Activated T-helper 1 cell treated with anti-CD3 and anti-CD28 coated beads, Interleukin-12 subunit alpha, Interleukin-12 subunit beta, Interleukin-2, Interleukin-4 antibody, amounts not matched to agents 30 ng/mL and 10 ng/mL and 1 ng/mL, durations not matched to agents 14 hours and 24 hours and 36 hours (primary cell): ENCODE measurements at regions of chr20 and their contacts with region 1.

Region 1: GRCh38 chr20:34129518-34130162 is 17.6 kb upstream of the EIF2S2 start:
- DNase-seq: peak; percentile 50
- H3K4me3 Mint-ChIP-seq: no peak overlapping the region
- H3K27ac Mint-ChIP-seq: no peak overlapping the region
- H3K4me1 Mint-ChIP-seq: peaks cover 12% of the 10 kb centered on the region
- H3K27me3 Mint-ChIP-seq: peaks cover 18% of the 10 kb centered on the region

Region 2: DNA sequence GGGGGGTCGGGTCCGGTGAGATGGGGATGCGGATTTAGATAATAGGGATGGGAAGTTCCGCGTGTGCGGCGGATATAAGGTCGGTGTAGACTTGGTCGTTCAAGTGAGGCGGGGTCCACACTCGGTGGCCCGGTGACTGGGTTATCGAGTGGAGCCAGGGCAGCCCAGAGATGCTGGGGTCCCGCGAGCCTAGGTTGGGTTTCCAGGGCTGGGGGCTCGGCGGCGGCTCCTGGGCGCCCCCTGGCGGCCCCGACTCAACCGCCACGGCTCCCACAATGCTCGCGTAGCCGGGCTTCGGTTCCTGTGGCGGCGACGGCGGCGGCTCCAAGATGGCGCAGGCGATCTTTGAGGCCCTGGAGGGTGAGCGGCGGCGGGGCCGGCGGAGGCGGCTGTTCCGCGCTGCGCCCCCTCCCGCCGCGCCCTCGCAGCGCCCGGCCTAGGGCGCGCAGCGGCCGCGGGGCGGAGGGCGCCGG is 397.9 kb before region 1 on chr20 and contains the start of gene ZNF341:
- intact Hi-C with region 1: loop called (anchors 1 kb)
- DNase-seq: peak; percentile 87
- H3K4me3 Mint-ChIP-seq: peak within 1 kb of the TSS; percentile 89
- H3K27ac Mint-ChIP-seq: peak within 1 kb of the TSS; percentile 97
- H3K4me1 Mint-ChIP-seq: peaks cover 27% of the 10 kb centered on the region
- H3K27me3 Mint-ChIP-seq: no peaks in the 10 kb centered on the region
- total RNA-seq, gene ZNF341: 6.7 and 6.8 TPM in 2 replicates

Region 3: DNA sequence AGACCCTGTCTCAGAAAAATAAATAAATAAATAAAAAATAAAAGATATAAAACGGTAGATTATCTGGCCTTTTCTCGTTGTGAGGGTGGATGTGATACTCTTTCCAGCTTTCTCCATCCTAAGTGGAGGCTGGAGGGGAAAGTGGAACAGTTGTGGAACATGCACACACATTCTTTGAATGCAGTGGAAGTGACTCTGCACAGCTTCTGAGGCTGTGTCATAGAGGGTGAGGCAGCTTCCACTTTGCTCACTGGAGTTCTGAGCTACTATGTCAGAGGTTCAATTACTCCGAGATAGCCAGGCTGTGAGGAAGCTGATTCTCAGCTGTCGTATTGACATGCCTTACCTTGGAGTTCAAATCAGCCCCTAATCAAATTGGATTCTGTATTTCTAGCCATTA is 236.3 kb before region 1 on chr20:
- intact Hi-C with region 1: no loop called
- DNase-seq: no peak
- H3K4me3 Mint-ChIP-seq: no peak overlapping the region
- H3K27ac Mint-ChIP-seq: no peak overlapping the region
- H3K4me1 Mint-ChIP-seq: no peaks in the 10 kb centered on the region
- H3K27me3 Mint-ChIP-seq: peaks cover 14% of the 10 kb centered on the region

Region 4: GRCh38 chr20:33915726-33916331 is 213.8 kb before region 1 on chr20:
- intact Hi-C with region 1: loop called (anchors 1 kb)
- DNase-seq: peak; percentile 20
- H3K4me3 Mint-ChIP-seq: no peak overlapping the region
- H3K27ac Mint-ChIP-seq: no peak overlapping the region
- H3K4me1 Mint-ChIP-seq: peaks cover 5% of the 10 kb centered on the region
- H3K27me3 Mint-ChIP-seq: peaks cover 13% of the 10 kb centered on the region

Region 5: DNA sequence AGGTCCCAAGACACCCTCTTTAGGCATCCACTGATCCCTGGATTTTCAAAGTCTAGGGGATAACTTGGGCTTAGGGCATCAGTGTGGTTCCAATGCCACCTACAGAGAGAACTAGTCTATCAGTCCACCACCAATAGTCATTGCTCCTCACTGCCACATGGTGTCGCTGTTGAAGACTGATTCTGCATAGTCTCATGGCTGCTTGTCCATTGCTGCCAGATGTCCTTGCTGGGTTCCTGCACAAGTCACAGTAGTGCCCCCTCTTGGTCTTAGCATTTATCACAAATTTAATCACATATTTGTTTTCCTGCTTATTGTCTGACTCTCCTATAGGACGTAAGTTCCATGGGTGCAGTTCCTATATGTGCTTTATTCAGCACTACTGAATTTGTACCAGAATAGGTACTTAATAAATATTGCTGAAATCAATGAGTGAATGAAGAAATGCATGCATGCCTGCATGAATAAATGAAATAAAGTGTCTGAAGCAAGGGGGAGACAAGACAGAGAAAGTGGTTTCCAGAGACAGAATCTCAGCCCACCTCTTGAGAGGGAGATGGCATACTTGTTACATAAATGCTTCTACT is 181.8 kb before region 1 on chr20:
- intact Hi-C with region 1: loop called (anchors 1 kb)
- DNase-seq: peak; percentile 9
- H3K4me3 Mint-ChIP-seq: no peak overlapping the region
- H3K27ac Mint-ChIP-seq: no peak overlapping the region
- H3K4me1 Mint-ChIP-seq: no peaks in the 10 kb centered on the region
- H3K27me3 Mint-ChIP-seq: peaks cover 4% of the 10 kb centered on the region

Region 6: DNA sequence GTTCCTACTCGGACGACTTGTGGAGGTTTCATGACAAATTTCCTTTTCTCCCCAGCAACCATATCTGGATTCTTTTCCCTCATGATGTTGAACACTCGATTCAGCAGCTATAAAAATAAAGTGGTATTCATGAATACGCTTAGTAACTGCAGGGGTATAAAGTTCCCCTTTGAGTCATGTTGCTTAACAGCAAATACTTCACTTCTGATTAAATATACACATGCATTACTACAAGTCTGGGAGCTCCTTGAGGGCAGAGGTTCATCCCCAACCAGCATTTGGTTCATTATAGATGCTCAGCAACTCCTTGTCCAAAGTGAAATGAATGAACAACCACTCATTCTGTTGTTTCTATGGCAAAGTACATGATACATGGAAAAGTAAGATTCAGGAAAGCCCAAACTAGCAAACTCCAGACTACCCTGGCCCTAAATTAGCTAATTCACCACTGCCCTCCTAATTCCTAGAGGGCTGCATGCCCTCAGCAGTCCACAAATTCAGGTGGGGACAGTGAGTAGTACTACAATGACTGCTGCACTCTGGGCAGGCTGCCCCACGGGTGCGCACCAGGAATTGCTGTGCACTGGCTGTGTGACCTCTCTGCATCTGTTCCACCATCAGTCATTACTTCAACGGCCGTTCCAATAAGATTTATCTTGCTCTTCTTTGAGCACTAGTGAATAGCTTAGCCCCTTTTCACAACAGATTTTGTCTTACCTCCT is 32.8 kb before region 1 on chr20:
- intact Hi-C with region 1: loop called (anchors 1 kb)
- DNase-seq: no peak
- H3K4me3 Mint-ChIP-seq: no peak overlapping the region
- H3K27ac Mint-ChIP-seq: peak overlapping the region; percentile 9
- H3K4me1 Mint-ChIP-seq: peaks cover 9% of the 10 kb centered on the region
- H3K27me3 Mint-ChIP-seq: no peaks in the 10 kb centered on the region

Region 7: GRCh38 chr20:34180460-34181120 is 51.0 kb after region 1 on chr20:
- intact Hi-C with region 1: no loop called
- DNase-seq: no peak
- H3K4me3 Mint-ChIP-seq: no peak overlapping the region
- H3K27ac Mint-ChIP-seq: no peak overlapping the region
- H3K4me1 Mint-ChIP-seq: no peaks in the 10 kb centered on the region
- H3K27me3 Mint-ChIP-seq: peaks cover 5% of the 10 kb centered on the region

Region 8: GRCh38 chr20:34293589-34293988 is 163.9 kb after region 1 on chr20:
- intact Hi-C with region 1: no loop called
- DNase-seq: no peak
- H3K4me3 Mint-ChIP-seq: no peak overlapping the region
- H3K27ac Mint-ChIP-seq: no peak overlapping the region
- H3K4me1 Mint-ChIP-seq: no peaks in the 10 kb centered on the region
- H3K27me3 Mint-ChIP-seq: no peaks in the 10 kb centered on the region